ENCODE measurements at regions of chrX and their contacts with region 1.

Region 1: DNA sequence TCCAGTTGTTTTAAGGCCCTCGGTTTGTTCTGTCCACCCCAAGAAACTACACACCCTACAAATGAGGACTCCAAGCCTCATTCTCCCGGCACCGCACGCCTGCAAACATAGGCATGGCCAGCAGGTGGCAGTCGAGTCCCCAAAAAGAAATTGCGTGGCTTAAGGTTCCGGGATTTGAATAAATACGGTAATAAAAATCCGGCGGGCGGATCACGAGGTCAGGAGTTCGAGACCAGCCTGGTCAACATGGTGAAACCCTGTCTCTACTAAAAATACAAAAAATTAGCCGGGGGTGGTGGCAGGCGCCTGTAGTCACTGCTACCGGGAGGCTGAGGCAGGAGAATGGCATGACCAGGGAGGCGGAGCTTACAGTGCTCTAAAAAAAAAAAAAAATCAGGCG is 21.8 kb upstream of the CSF2RA start:
- DNase-seq: peak; percentile 67 to 78 (median 72)
- H3K4me3 ChIP-seq: no peak overlapping the region
- H3K4me3 Mint-ChIP-seq: peak overlapping the region in 3 of 8 donors; percentile 30 to 80 (median 44)
- H3K27ac ChIP-seq: no peak overlapping the region
- H3K27ac Mint-ChIP-seq: peak overlapping the region in 6 of 7 donors; percentile 37 to 90 (median 75)
- H3K4me1 ChIP-seq: peaks cover 26% of the 10 kb centered on the region
- H3K4me1 Mint-ChIP-seq: peaks cover 16 to 32% (median 23%) of the 10 kb centered on the region in 4 donors
- H3K27me3 ChIP-seq: no peaks in the 10 kb centered on the region
- H3K27me3 Mint-ChIP-seq: no peaks in the 10 kb centered on the region

Region 2: GRCh38 chrX:1205680-1206611 is 40.9 kb before region 1 on chrX:
- CTCF ChIA-PET with region 1: no interaction called
- POLR2A ChIA-PET with region 1: no interaction called
- intact Hi-C with region 1: loop called (anchors 1 kb)
- DNase-seq: peak; percentile 52 to 72 (median 67)
- H3K4me3 ChIP-seq: peak overlapping the region; percentile 31 to 66
- H3K4me3 Mint-ChIP-seq: peak overlapping the region; percentile 80 to 87 (median 84)
- H3K27ac ChIP-seq: no peak overlapping the region
- H3K27ac Mint-ChIP-seq: peak overlapping the region in 5 of 7 donors; percentile 26 to 80 (median 49)
- H3K4me1 ChIP-seq: peaks cover 30% of the 10 kb centered on the region
- H3K4me1 Mint-ChIP-seq: peaks cover 19 to 36% (median 27%) of the 10 kb centered on the region in 4 donors
- H3K27me3 ChIP-seq: no peaks in the 10 kb centered on the region
- H3K27me3 Mint-ChIP-seq: no peaks in the 10 kb centered on the region

Region 3: DNA sequence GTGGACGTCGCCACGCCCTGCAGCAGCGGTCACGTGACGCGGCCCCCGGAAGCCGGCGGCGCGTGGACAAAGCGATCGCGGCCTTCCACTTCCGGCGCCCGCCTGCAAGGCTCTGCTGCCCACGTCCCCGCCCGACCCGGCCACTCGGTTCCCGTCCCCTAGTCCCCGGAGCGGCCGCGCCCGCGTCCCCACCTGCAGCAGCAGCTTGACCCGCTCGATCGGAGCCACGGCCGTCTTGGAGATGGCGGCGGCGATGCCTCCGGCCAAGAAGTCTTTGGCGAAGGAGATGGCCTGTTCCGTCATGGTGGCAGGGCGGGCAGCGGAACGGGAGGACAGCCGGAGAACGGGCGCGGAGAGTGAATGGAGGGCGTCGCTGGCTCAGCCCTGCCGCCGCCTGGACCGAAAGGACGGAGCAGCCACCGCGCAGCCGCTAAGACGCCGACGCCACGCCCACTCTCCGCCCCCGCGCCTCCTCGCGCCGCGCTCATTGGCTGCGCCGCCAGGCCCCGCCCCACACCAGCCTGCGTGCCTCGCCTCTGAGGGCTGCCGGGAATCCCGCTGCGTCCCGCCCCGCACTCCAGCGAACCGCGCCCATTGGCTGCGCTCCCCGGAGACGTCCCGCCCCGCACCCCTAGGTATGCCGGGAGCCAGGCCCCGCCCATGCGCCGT is 145.0 kb after region 1 on chrX and contains the start of gene SLC25A6:
- CTCF ChIA-PET with region 1: no interaction called
- POLR2A ChIA-PET with region 1: no interaction called
- intact Hi-C with region 1: loop called (anchors 1 kb)
- DNase-seq: peak; percentile 98 to 99 (median 99)
- H3K4me3 ChIP-seq: peak within 1 kb of the TSS; percentile 61 to 94
- H3K4me3 Mint-ChIP-seq: peak within 1 kb of the TSS; percentile 88 to 94 (median 91)
- H3K27ac ChIP-seq: peak within 1 kb of the TSS; percentile 94
- H3K27ac Mint-ChIP-seq: peak within 1 kb of the TSS; percentile 83 to 96 (median 90)
- H3K4me1 ChIP-seq: peaks cover 47% of the 10 kb centered on the region
- H3K4me1 Mint-ChIP-seq: peaks cover 16 to 52% (median 34%) of the 10 kb centered on the region in 4 donors
- H3K27me3 ChIP-seq: no peaks in the 10 kb centered on the region
- H3K27me3 Mint-ChIP-seq: no peaks in the 10 kb centered on the region
- total RNA-seq, gene SLC25A6: 249 to 252 TPM

Region 4: DNA sequence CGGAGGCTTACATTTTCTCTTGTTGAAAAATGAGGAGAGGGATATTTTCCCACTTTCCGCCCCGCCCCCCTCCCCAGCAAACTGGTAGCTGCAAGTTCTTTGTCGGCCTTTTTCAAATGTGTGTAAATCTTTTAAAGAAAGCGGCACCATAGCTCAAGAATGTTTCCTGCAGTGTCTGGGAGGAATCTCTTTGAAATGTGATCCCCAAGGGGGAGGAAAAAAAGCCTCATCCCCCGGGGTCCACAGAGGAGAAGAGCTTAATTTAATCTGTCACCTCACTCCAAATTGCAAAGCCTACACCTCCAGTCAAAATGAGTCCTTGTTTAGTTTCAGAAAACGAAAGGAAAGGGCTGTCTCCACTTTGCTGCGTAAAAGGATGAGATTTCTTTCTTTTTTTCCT is 402.8 kb after region 1 on chrX:
- CTCF ChIA-PET with region 1: no interaction called
- POLR2A ChIA-PET with region 1: no interaction called
- intact Hi-C with region 1: loop called (anchors 5 kb)
- DNase-seq: no peak
- H3K4me3 ChIP-seq: no peak overlapping the region
- H3K4me3 Mint-ChIP-seq: no peak overlapping the region
- H3K27ac ChIP-seq: no peak overlapping the region
- H3K27ac Mint-ChIP-seq: no peak overlapping the region
- H3K4me1 ChIP-seq: no peaks in the 10 kb centered on the region
- H3K4me1 Mint-ChIP-seq: peaks cover 5 to 10% (median 8%) of the 10 kb centered on the region in 4 donors
- H3K27me3 ChIP-seq: no peaks in the 10 kb centered on the region
- H3K27me3 Mint-ChIP-seq: peaks cover 2 to 8% of the 10 kb centered on the region in 2 donors

Measured in CD4-positive, alpha-beta memory T cell (primary cell).